Activated naive CD8-positive, alpha-beta T cell treated with anti-CD3 and anti-CD28 coated beads, Interleukin-2, amount 10 ng/mL, durations not matched to agents 7 days and 5 days (primary cell): ENCODE measurements at regions of chr19 and their contacts with region 1.

Region 1: DNA sequence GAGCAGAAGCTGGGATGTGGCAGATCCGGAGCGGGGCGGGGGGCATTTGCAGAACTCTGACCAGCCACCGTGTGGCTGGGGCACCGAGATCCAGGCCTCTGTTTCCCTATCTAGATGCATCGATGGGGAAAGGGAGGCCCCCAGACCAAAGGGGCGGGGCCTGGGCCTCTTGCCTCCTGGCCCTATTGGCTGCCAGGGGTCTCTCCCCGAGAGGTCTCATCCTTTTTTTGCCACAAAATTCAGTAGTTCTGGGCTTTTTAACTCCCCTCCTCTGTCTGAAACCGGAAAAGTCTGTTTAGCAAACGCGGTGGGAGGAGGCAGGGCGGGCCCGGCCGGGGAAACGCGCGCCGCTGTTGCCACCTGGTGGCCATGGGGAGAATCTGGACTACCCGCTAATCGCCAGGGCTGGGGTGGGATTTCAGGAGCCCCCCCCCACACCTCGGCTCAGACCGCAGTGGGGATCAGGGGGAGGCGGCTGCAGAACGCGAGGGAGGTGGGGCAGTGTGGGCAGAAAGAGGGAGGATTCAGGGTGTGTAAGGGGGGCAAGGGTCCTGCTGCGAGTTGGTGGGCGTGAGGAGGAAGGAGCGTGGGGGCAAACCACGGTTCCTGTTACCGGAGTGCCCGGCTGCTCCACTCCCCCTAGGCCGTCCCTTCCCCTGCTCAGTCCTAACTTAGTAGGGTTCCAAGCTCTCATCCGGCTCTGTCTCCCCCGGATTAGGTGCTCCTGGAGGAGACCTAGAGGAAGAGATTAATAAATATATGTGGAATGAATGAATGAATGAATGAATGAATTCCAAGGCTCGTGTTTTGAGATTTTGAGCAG is 28.3 kb downstream of the IL12RB1 start:
- DNase-seq: peak; percentile 88
- ATAC-seq: peak; percentile 82
- H3K4me3 Mint-ChIP-seq: peak overlapping the region; percentile 55
- H3K27ac Mint-ChIP-seq: peak overlapping the region; percentile 75
- H3K4me1 Mint-ChIP-seq: peaks cover 16% of the 10 kb centered on the region
- H3K27me3 Mint-ChIP-seq: no peaks in the 10 kb centered on the region

Region 2: DNA sequence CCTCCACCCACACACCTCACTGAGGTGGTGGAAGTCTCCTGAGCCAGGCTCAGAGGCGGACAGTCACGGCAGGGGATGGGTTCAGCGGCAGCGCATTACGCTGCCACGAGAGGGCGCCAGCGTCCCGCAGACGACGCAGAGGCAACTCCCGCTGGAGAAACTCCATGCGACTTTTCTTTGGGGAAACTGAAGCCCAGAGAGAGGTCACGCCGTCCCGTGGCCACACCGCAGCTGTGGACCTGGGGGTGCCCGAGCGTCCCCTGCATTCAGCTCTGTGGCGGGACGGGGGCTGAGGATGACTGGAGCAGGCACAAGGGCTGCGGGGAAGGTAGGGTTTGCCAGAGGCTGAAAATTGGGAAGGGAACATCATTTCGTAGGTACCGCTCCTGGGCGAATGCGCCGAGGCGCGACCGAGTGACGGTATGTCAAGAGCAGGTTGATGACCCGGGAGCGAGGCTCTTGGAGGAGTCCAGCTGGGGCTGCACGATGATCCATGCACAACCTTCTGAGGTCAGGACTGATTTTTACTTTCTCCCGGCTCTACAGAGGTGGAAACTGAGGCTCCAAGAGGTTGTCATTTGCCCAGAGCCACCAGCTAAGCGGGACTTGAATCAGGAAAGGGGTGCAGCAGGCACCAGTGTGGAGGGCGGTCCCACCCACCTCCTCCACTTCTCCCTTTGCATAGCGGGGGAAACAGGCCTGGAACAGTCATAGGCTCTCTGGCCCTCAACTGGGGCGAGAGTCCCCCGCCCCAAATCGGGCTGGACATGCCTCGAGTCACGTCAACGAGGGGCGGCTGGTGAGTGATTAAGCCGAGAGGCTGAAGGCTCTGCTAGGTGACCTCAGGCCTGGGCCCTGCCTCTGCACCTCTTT is 51.1 kb before region 1 on chr19:
- POLR2A ChIA-PET with region 1: interaction called, 46 read pairs
- DNase-seq: peak; percentile 90
- ATAC-seq: peak; percentile 58
- H3K4me3 Mint-ChIP-seq: peak overlapping the region; percentile 87
- H3K27ac Mint-ChIP-seq: peak overlapping the region; percentile 86
- H3K4me1 Mint-ChIP-seq: peaks cover 20% of the 10 kb centered on the region
- H3K27me3 Mint-ChIP-seq: no peaks in the 10 kb centered on the region

Region 3: GRCh38 chr19:18117692-18118378 is 59.4 kb after region 1 on chr19:
- POLR2A ChIA-PET with region 1: no interaction called
- DNase-seq: peak; percentile 100
- ATAC-seq: peak; percentile 62
- H3K4me3 Mint-ChIP-seq: peak overlapping the region; percentile 88
- H3K27ac Mint-ChIP-seq: peak overlapping the region; percentile 97
- H3K4me1 Mint-ChIP-seq: peaks cover 29% of the 10 kb centered on the region
- H3K27me3 Mint-ChIP-seq: no peaks in the 10 kb centered on the region